Ovary (tissue), 10 donors: ENCODE measurements at regions of chr20 and their contacts with region 1.

Region 1: DNA sequence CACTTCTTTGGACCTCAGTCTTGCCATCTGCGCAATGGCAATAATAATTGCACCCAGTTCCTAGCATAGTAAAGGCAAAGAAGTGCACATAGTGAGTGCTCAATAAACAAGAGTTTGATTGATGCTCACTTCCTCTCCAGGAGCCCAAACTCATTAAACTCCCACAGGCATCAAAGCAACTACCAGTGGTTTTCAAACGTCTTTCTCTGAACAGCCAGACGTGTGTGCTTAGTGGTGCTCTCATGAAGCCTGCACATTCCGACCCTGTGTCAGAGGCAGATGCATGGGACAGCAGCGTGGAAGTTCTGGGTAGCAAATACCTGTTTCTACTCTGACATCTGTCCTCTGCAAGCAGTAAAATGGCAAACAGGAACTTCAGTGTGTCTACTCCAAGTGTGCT is 146.3 kb upstream of the MAFB start:
- DNase-seq: no peak
- H3K4me3 ChIP-seq: no peak overlapping the region
- H3K27ac ChIP-seq: no peak overlapping the region
- H3K4me1 ChIP-seq: no peaks in the 10 kb centered on the region
- H3K27me3 ChIP-seq: no peaks in the 10 kb centered on the region
- CTCF ChIP-seq: no peak
- EP300 ChIP-seq: no peak
- POLR2A ChIP-seq: no peak

Region 2: DNA sequence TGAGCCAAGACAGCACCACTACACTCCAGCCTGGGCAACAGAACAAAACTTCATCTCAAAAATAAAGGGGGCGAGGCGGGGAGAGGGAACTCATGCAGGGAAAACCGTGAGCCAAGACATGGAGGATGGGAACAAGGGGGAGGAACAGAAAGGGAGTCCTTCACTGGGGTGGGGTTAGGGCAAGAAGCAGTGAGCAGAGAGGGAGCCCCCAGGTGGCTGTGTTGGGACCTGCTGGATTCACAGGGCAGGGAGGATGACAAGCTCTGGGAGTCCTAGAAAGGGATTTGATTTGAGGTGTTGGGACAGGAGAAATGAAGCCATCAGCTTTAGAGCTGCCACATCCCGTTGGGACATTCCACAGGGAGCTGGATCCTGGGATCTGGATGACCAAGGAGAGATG is 102.7 kb after region 1 on chr20:
- intact Hi-C with region 1: no loop called
- DNase-seq: no peak
- H3K4me3 ChIP-seq: no peak overlapping the region
- H3K27ac ChIP-seq: no peak overlapping the region
- H3K4me1 ChIP-seq: no peaks in the 10 kb centered on the region
- H3K27me3 ChIP-seq: no peaks in the 10 kb centered on the region
- CTCF ChIP-seq: no peak
- EP300 ChIP-seq: no peak
- POLR2A ChIP-seq: no peak

Region 3: DNA sequence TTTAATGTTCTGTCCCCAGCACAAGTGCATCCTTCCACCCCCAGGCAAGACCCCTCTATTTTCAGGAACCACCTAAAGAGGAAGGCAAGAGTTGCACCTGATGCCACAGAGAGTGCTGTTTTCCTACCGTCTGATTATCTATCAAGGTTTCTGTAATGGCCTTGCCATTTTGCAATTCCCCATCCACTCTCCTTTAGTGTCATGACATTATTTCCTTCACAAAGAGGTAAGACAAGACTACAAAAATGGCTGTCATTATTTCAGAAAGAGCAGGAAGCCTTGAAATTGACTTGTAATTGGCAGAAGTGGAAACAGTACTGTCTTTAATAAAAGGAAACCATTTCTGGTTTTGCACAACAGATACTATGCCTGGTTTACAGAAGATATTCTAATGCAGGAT is 1927.7 kb after region 1 on chr20:
- intact Hi-C with region 1: loop called in 1 of 4 experiments (anchors 5 kb)
- DNase-seq: no peak
- H3K4me3 ChIP-seq: no peak overlapping the region
- H3K27ac ChIP-seq: no peak overlapping the region
- H3K4me1 ChIP-seq: no peaks in the 10 kb centered on the region
- H3K27me3 ChIP-seq: no peaks in the 10 kb centered on the region
- CTCF ChIP-seq: no peak
- EP300 ChIP-seq: no peak
- POLR2A ChIP-seq: no peak